ENCODE measurements at regions of chr5 and their contacts with region 1.

Region 1: DNA sequence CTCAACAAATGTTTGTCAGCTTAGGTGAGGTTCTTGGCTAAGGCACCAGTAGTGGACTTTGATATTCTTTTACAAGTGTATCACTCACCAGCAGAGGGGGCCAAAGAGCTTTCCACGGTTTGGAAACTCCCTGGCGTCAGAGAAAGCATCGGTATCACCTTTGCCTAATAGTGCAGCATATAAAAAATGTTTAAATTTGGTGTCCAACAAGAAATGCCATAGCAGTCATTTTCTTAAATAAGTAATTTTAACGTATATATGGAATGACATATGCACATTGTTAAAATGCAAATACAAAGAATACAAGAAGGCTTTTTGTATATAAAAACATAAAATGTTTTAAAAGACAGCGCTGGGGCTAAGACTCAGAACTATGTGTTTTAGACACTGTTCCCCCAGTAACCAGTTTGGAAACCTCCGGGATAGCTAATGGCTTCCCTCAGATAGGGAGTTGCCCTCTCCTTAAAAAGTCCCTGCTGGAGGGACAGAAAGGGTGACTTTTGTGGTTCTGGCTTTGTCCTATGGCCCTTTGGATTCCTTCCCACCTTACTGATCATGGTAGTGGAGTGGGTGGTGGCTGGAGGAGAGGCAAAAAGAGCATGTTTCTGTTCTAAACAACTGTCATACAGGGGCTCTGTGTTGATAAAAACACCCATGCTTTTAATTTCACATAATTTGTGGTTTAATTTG is 124.6 kb downstream of the GPBP1 start:
- DNase-seq: peak; percentile 70
- H3K4me3 Mint-ChIP-seq: peak overlapping the region; percentile 57
- H3K27ac Mint-ChIP-seq: no peak overlapping the region
- H3K4me1 Mint-ChIP-seq: peaks cover 30% of the 10 kb centered on the region
- H3K27me3 Mint-ChIP-seq: peaks cover 7% of the 10 kb centered on the region

Region 2: DNA sequence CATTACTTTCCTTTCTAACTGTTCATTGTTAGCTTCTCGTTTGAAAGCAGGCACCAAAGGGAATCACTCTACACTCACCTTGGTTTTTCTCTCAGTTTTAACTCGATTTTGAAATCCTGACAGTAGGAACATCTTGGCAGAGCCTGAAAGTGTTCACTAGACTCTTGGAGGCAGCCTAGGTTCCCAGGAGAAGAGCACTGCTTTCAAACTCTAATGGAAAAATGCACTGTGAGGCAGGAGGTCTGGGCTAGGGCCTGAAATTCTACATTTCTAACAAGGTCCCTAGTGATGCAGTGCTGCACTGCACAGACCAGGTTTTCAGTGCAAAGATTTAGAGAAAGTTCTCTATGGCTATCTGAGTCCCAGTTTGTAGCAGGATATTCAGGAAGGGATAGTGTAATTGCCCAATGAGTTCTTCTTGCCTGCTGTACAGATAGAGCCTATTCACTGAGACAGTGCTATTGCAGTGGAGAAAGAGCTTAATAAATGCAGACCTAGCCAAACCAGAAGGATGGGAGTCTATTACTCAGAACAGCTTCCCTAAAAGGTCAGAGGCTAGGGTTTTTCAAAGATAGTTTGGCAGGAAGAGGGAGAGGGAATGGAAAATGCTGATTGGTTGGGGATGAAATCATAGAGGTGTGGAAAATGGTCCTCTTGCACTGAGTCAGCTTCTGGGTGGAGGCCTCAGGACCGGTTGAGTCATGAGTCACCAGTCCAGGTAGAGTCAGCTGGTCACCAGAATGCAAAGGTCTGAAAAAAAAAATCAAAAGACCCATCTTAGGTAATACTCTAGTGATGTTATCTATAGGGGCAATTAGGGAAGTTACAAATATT is 29.3 kb after region 1 on chr5:
- intact Hi-C with region 1: loop called (anchors 1 kb)
- DNase-seq: no peak
- H3K4me3 Mint-ChIP-seq: no peak overlapping the region
- H3K27ac Mint-ChIP-seq: peak overlapping the region; percentile 42
- H3K4me1 Mint-ChIP-seq: peaks cover 21% of the 10 kb centered on the region
- H3K27me3 Mint-ChIP-seq: peaks cover 5% of the 10 kb centered on the region

Region 3: GRCh38 chr5:57432876-57433275 is 134.4 kb after region 1 on chr5:
- intact Hi-C with region 1: loop called (anchors 5 kb)
- DNase-seq: no peak
- H3K4me3 Mint-ChIP-seq: no peak overlapping the region
- H3K27ac Mint-ChIP-seq: no peak overlapping the region
- H3K4me1 Mint-ChIP-seq: peaks cover 1% of the 10 kb centered on the region
- H3K27me3 Mint-ChIP-seq: no peaks in the 10 kb centered on the region

Region 4: GRCh38 chr5:57598756-57599155 is 300.3 kb after region 1 on chr5:
- intact Hi-C with region 1: loop called (anchors 10 kb)
- DNase-seq: no peak
- H3K4me3 Mint-ChIP-seq: no peak overlapping the region
- H3K27ac Mint-ChIP-seq: no peak overlapping the region
- H3K4me1 Mint-ChIP-seq: peaks cover 18% of the 10 kb centered on the region
- H3K27me3 Mint-ChIP-seq: peaks cover 3% of the 10 kb centered on the region

Region 5: GRCh38 chr5:58460732-58461286 is 1162.4 kb after region 1 on chr5:
- intact Hi-C with region 1: loop called (anchors 1 kb)
- DNase-seq: peak; percentile 85
- H3K4me3 Mint-ChIP-seq: peak overlapping the region; percentile 74
- H3K27ac Mint-ChIP-seq: peak overlapping the region; percentile 5
- H3K4me1 Mint-ChIP-seq: peaks cover 17% of the 10 kb centered on the region
- H3K27me3 Mint-ChIP-seq: peaks cover 21% of the 10 kb centered on the region